ENCODE measurements at regions of chr20 and their contacts with region 1.

Region 1: GRCh38 chr20:815914-816606 is 17.5 kb upstream of the FAM110A start:
- DNase-seq: peak; percentile 82
- CTCF ChIP-seq: peak; percentile 98

Region 2: GRCh38 chr20:956330-956951 is 140.4 kb after region 1 on chr20:
- in situ Hi-C with region 1: loop called (anchors 5 kb)
- DNase-seq: peak; percentile 90
- CTCF ChIP-seq: peak; percentile 99

Region 3: GRCh38 chr20:1212607-1213396 is 396.7 kb after region 1 on chr20:
- in situ Hi-C with region 1: loop called (anchors 25 kb)
- DNase-seq: peak; percentile 70
- CTCF ChIP-seq: peak; percentile 91

Measured in GM13977 (cell line).